ENCODE measurements at regions of chr2 and their contacts with region 1.

Region 1: GRCh38 chr2:226649871-226650660 is 149.6 kb downstream of the IRS1 start:
- DNase-seq: peak; percentile 99
- H3K4me3 ChIP-seq: no peak overlapping the region
- CTCF ChIP-seq: no peak

Region 2: DNA sequence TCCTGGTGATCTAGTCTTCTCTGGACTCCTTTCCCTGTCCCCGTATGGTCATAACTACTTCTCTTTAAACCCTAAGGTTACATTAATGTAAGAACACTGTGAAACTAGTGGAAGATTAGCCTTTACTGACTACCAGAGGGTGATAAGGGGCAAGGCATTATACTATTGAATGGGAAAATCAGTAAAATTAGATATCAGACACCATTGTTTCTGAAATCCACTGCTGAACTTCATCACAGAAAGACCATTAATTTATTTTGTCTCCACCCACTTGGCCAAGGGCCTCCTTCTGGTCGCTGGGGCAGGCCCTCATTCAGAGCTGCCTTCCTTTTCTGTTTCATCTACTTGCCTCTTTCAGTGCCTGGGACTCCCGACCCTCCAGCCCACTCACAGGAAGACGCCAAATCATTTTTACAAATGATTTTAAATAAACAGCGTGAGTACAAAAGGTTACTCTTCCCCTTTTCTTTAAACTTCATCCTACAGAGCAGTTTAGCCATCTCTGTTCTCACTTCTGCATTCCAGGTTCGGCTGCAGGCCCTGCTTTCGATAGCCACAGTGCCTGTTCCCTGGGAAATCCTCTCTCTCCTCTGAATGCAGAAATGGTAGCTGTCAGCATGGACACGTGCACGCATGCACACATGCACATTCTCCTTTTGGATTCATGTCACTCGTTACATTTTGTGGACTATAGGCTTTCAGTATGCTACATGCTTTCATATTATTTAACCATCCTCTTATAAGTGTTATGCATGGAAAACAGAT is 1537.5 kb before region 1 on chr2:
- in situ Hi-C with region 1: loop called (anchors 10 kb)
- DNase-seq: no peak
- H3K4me3 ChIP-seq: no peak overlapping the region
- CTCF ChIP-seq: no peak

Region 3: DNA sequence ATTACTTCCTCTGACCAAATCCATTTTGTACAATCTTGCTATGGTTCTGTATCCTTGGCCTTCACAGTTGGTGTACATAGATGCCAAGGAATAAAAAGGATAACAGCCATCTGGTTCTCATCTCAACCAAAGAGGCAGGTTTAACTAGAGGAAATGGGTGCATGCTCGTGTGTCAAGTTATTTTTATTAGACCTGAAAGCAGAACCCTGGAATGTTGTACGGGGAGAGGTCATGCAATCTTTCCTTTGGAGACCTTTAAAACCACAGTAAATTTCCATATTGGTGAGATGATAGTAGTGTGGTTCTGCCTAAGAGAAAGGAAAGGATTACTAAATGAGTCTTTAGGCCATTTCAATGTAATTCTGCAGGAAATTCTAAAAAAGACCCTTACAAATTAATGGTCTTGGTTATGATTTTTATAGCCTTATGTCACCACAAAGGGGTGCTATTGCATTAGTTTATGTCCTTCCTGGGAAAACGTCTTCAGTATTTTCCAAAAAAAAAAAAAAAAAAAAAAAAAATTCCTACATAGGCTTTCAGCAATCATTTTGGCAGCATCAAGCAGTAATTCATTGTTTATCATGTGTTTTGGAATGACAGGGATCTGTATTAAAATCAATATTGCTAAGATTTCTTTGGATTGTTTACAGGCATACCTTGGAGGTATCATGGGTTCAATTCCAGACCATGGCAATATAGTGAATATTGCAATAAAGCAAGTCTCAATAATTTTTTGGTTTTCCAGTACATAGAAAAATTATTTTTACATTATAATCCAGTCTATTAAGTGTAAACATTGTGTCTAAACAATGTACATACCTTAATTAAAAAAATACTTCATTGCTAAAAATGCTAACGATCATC is 979.7 kb before region 1 on chr2:
- in situ Hi-C with region 1: loop called (anchors 5 kb)
- DNase-seq: peak; percentile 60
- H3K4me3 ChIP-seq: no peak overlapping the region
- CTCF ChIP-seq: no peak

Region 4: DNA sequence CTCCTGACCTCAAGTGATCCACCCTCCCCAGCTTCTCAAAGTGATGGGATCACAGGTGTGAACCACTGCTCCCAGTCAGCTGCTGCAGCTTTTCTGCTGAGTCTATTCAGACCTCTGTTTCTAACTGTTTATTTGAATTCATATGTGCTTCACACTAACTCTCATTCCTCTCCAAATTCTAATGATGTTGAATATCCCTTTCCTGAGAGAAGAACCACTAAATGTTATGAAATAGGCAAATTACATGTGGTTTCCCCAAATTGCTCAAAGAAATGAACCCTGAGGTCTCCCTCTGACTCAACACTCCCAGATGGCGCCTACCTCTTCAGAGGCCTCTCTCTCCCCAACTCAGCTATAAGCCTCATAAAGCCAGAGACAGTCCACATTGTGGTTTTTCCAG is 51.0 kb after region 1 on chr2:
- in situ Hi-C with region 1: no loop called
- DNase-seq: peak; percentile 90
- H3K4me3 ChIP-seq: no peak overlapping the region
- CTCF ChIP-seq: no peak

Measured in astrocyte of the cerebellum (primary cell).